ENCODE measurements at regions of chr10 and their contacts with region 1.

Region 1: DNA sequence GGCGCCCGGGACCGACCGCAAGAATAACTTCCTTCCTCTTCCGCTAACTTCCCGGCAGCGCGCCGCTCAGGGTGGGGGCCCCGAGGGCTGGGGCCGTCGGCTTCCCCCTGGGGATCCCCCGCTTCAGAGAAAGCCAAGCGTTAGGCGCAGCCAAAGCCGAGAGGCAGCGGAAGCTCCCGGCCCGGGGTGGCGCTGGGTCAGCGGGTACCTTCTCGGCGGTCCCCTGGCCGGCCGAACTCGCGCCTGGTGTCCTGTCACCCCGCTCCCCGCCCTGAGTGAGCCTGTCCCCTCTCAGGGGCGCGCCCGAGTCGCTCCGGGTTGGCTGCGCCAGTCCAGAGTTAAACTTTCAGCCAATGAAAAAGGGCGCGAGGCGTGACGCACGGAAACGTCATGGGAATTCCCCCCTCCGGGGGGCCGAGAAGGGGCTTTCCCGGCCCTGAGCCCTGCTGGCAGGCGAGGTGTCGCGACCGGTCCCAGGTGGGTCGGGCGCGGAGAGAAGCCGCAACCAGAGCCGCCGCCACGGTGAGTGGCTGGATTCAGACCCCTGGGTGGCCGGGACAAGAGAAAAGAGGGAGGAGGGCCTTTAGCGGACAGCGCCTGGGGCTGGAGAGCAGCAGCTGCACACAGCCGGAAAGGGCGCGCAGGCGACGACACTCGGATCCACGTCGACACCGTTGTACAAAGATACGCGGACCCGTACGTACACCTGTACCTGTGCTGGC is 1.3 kb upstream of the NFKB2 start:
- DNase-seq: peak; percentile 96
- H3K4me3 ChIP-seq: peak overlapping the region; percentile 78
- H3K27ac ChIP-seq: peak overlapping the region; percentile 70
- H3K4me1 ChIP-seq: peaks cover 23% of the 10 kb centered on the region
- CTCF ChIP-seq: peak; percentile 95

Region 2: GRCh38 chr10:101476383-101476782 is 917.9 kb before region 1 on chr10:
- CTCF ChIA-PET with region 1: no interaction called
- POLR2A ChIA-PET with region 1: no interaction called
- intact Hi-C with region 1: no loop called
- DNase-seq: no peak
- H3K4me3 ChIP-seq: no peak overlapping the region
- H3K27ac ChIP-seq: no peak overlapping the region
- H3K4me1 ChIP-seq: no peaks in the 10 kb centered on the region
- CTCF ChIP-seq: no peak

Region 3: DNA sequence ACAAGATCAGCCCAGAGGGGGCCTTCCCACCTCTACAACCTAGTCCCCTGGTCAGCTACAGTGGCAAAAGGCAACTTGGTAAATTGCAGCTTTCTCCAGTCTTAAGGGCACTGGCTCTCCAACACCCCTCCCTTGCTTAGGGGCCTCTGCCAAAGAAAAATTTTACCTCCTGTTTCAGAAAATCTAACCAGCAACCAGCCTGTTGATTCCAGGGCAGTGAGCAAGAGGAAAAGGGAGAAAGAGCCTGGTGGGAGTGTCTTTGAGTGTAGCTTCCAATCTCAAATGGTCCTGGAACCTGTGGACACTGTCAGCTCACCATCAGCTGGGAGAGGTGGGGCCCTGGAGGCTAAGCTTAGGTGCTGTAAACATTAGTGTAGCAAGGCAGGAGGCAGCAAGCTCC is 85.4 kb after region 1 on chr10:
- CTCF ChIA-PET with region 1: no interaction called
- POLR2A ChIA-PET with region 1: no interaction called
- intact Hi-C with region 1: loop called (anchors 1 kb)
- DNase-seq: no peak
- H3K4me3 ChIP-seq: no peak overlapping the region
- H3K27ac ChIP-seq: no peak overlapping the region
- H3K4me1 ChIP-seq: peaks cover 3% of the 10 kb centered on the region
- CTCF ChIP-seq: no peak

Region 4: GRCh38 chr10:102583435-102584417 is 189.5 kb after region 1 on chr10:
- CTCF ChIA-PET with region 1: no interaction called
- POLR2A ChIA-PET with region 1: no interaction called
- intact Hi-C with region 1: loop called (anchors 1 kb)
- DNase-seq: peak; percentile 90
- H3K4me3 ChIP-seq: no peak overlapping the region
- H3K27ac ChIP-seq: no peak overlapping the region
- H3K4me1 ChIP-seq: no peaks in the 10 kb centered on the region
- CTCF ChIP-seq: peak; percentile 87

Measured in OCI-LY7 (cell line).